Posterior cingulate gyrus (tissue), 11 donors: ENCODE measurements at regions of chr22 and their contacts with region 1.

Region 1: GRCh38 chr22:41800348-41801146 is at the start of gene CCDC134:
- DNase-seq: peak; percentile 86 to 99 (median 92)

Region 2: DNA sequence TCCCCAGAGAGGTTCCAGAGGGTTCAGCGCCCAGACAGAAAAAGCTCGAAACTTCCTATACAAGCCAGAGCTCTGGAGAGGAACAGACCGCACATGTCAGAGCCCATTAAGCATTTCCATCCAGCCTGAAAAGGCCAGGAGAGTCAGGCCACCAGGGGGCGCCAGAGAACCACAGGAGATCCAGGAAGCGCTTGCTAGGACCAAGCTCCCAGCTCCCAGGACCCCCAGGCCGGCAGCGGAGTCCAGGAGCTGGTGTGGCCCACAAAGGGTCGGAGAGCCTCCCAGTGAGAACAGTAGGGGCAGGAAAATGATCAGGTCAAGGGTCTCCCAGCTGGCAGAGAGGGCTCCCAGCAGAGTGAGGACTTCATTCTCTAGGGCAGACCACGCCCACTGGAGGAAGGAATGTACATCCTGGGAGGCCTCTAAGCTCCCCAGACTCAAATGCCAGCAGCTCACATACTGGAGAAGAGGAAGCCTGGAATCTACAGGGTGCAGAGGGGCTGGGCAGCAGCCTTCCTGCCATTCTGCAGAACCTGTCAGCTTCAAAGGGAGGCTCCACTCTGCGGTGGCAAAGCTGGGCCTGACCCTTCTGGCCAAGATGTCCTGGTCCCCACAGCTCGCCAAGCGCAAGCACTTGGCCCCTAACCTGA is 103.3 kb before region 1 on chr22:
- intact Hi-C with region 1: loop called (anchors 10 kb)
- DNase-seq: peak; percentile 82 to 98 (median 96)

Region 3: DNA sequence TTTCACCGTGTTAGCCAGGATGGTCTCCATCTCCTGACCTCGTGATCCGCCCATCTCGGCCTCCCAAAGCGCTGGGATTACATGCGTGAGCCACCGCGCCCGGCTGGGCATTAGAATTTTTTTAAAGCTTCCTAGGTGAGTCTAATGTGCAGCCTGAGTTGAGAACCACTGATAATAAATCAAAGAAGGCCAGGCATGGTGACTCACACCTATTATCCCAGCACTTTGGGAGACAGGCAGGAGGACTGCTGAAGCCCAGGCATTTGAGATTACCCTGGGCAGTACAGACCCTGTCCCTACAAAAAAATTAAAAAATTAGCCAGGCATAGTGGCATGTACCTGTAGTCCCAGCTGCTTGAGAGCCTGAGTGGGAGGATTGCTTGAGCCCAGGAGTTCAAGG is 87.5 kb before region 1 on chr22:
- intact Hi-C with region 1: no loop called
- DNase-seq: no peak

Region 4: GRCh38 chr22:41833369-41834004 is 32.9 kb after region 1 on chr22:
- intact Hi-C with region 1: loop called (anchors 2 kb)
- DNase-seq: peak; percentile 23 to 93 (median 48)

Region 5: DNA sequence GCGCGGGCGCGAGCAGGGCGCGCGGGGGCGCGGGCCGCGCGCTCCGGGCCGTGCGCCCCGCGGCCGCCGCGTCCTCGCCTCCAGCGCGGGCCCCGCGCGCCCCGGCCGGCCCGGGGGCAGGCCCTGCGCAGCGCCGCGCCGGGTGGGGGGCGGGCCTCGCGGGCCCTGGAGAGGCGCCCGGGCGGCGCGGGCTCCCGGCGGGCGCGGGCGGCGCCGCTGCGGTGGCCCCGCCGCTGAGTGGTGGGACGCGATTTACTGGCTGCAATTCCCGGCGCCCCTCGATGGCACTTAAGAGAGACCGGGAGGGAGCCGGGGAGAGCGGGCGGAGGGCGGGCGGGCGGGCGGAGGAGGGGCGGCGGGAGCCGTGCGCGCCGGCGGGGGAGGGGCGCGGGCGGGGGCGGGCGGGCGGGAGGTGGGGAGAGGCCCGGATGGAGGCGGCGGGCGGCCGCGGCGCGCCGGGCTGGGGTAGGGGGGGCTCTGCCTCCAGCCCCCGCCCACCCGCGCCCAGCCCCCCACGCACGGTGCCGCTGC is 543.1 kb after region 1 on chr22:
- intact Hi-C with region 1: no loop called
- DNase-seq: peak in 1 of 10 donors; percentile 60